Right ventricle myocardium inferior (tissue), 1 donor: ENCODE measurements at regions of chr1 and their contacts with region 1.

Region 1: GRCh38 chr1:228165372-228166169 is at the start of gene IBA57:
- DNase-seq: peak; percentile 100
- ATAC-seq: peak; percentile 94
- total RNA-seq, gene IBA57: 12.7 TPM

Region 2: DNA sequence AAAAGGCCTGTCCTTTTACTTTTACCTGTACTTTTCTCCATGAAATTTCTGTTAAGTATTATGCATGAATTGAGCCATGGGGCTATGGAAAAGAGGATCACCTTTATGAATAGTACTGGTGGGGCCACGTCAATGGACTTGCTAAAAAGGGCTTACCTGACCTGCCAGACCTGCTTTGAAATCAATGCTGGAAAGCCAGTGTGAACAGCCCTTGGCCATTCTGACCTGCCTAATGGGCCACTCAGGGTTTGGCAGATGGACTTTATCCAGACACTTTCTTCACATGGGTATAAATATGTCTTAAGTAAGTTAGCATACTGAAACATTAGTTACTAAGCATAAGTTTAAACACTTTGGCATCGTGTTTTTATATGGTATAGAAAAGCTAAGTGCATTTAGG is 33.8 kb before region 1 on chr1:
- intact Hi-C with region 1: loop called (anchors 2 kb)
- DNase-seq: no peak
- ATAC-seq: no peak

Region 3: DNA sequence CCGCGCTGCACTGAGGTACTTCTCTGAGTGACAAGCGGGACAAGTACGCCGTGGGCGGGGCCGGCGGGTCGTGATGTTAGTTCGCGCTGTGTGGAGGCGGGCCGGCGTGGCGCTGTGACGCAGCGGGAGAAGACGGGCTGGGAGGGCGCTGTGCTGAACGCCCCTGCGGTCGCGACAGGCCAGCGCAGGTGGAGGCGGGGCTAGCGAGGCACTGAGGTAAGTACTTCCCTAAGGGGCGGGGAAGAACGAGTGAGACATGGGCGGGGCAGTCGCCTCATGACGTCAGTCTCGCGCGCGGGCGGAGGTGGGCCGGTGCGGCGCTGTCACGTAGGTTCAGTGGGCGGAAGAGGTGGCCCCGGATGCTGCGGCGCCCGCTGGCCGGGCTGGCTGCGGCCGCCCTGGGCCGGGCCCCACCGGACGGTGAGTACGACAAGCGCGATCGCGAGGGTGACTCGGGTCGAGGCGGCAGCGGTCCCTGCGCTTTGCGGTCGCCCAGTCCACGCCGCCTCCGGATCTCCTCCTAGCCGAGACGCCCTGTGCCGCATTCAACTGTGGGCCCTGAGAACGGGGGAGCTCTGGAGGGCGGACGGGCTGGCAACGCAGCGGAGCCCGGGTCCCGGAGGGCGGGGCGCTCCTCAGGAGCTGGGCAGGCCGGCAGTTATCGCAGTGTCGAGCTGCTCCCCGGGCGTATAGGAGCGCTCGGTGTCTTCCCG is 25.5 kb before region 1 on chr1 and contains the start of gene GUK1:
- intact Hi-C with region 1: loop called (anchors 1 kb)
- DNase-seq: peak; percentile 100
- ATAC-seq: peak; percentile 95
- total RNA-seq, gene GUK1: 162 TPM

Region 4: GRCh38 chr1:228206582-228207351 is 41.2 kb after region 1 on chr1:
- intact Hi-C with region 1: loop called (anchors 1 kb)
- DNase-seq: no peak
- ATAC-seq: no peak